A549 (cell line): ENCODE measurements at regions of chr5 and their contacts with region 1.

Region 1: GRCh38 chr5:172714491-172715421 is 56.2 kb downstream of the DUSP1 start:
- DNase-seq: peak; percentile 98 to 99
- ATAC-seq: peak; percentile 82 to 89
- H3K4me3 ChIP-seq: no peak overlapping the region
- H3K27ac ChIP-seq: peak overlapping the region; percentile 98
- H3K4me1 ChIP-seq: peaks cover 45% of the 10 kb centered on the region
- CTCF ChIP-seq: peak; percentile 63
- EP300 ChIP-seq: peak; percentile 99 to 100
- POLR2A ChIP-seq: no peak
- RAD21 ChIP-seq: peak; percentile 59 to 60

Region 2: DNA sequence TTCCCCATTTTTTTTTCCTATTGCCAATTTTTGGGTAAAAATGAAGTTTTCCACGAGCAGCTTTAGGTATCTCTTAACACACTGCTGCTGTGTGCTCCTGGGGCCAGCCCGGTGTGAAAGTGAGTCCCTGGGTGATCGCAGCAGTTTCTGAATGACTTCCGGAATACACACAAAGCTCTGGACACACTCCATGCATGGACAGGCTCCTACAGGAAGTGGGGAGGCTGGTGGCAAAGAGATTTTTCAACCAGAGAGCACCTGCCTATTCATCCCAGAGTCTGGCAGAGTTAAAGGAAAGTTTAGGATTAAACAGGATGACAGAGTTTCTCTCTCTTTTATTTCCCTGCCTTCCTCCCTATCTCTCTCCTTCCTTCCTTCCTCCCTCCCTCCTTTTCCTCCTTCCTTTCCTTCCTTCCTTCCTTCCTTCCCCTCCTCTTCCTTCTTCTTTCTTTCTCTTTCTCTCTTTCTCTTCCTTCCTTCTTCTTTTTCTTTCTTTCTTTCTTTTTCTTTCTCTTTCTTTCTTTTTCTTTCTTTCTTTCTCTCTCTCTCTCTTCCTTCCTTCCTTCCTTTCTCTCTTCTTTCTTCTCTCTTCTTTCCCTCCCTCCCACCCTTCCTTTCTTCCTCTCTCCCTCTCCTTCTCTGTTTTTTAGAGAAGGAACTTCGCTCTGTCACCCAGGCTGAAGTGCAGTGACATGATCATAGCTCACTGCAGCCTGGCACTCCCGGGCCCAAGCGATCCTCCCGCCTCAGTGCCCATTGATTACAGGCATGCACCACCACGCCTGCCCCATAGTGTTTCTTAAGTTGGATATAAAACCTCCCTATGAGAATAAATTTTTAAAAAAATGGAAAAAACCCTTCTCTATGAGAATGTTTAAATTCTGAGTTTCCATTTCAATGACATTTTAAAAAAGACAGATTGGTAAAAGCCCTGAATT is 392.5 kb before region 1 on chr5:
- CTCF ChIA-PET with region 1: no interaction called
- POLR2A ChIA-PET with region 1: no interaction called
- DNase-seq: no peak
- ATAC-seq: peak in 1 of 2 experiments; percentile 32; a peak in 1 of 6 replicates
- H3K4me3 ChIP-seq: no peak overlapping the region
- H3K27ac ChIP-seq: no peak overlapping the region
- H3K4me1 ChIP-seq: no peaks in the 10 kb centered on the region
- CTCF ChIP-seq: no peak
- EP300 ChIP-seq: no peak
- POLR2A ChIP-seq: no peak
- RAD21 ChIP-seq: no peak

Region 3: DNA sequence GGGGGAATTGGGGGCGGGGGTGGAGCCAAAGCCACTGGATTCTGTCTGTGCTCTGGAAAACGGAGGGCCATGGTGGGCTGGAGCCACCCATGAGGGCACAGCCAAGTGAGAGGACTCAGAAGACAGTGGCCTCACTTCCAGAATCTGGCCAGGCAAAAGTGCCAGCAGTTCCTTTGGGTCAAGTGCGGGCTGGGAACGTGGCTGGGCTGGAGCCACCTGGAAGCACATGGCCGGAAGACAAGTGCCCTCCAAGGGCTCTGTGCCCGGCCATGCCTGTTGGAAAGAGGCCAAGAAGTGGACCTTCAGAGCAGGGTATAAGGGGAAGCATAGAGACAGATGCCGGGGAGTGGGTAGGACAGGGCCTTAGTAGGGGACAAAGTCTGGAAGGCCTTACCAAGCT is 248.7 kb before region 1 on chr5:
- CTCF ChIA-PET with region 1: no interaction called
- POLR2A ChIA-PET with region 1: no interaction called
- DNase-seq: no peak
- ATAC-seq: 0 out of 6 replicates have a peak, but pooled peaks of 1 of the 2 experiments have one; percentile 24
- H3K4me3 ChIP-seq: no peak overlapping the region
- H3K27ac ChIP-seq: no peak overlapping the region
- H3K4me1 ChIP-seq: no peaks in the 10 kb centered on the region
- CTCF ChIP-seq: no peak
- EP300 ChIP-seq: no peak
- POLR2A ChIP-seq: no peak
- RAD21 ChIP-seq: no peak

Region 4: GRCh38 chr5:172727551-172727950 is 12.8 kb after region 1 on chr5:
- CTCF ChIA-PET with region 1: interaction called, 36 read pairs
- POLR2A ChIA-PET with region 1: no interaction called
- DNase-seq: no peak
- ATAC-seq: no peak
- H3K4me3 ChIP-seq: no peak overlapping the region
- H3K27ac ChIP-seq: peak overlapping the region in 1 of 2 experiments; percentile 43; a peak in 1 of 6 replicates
- H3K4me1 ChIP-seq: peaks cover 18% of the 10 kb centered on the region; the same call in 2 of the 3 replicates
- CTCF ChIP-seq: no peak
- EP300 ChIP-seq: no peak
- POLR2A ChIP-seq: no peak
- RAD21 ChIP-seq: no peak

Region 5: GRCh38 chr5:172748341-172748843 is 33.6 kb after region 1 on chr5:
- CTCF ChIA-PET with region 1: interaction called, 16 read pairs
- POLR2A ChIA-PET with region 1: no interaction called
- DNase-seq: no peak
- ATAC-seq: no peak
- H3K4me3 ChIP-seq: no peak overlapping the region
- H3K27ac ChIP-seq: no peak overlapping the region
- H3K4me1 ChIP-seq: no peaks in the 10 kb centered on the region
- CTCF ChIP-seq: no peak
- EP300 ChIP-seq: no peak
- POLR2A ChIP-seq: no peak
- RAD21 ChIP-seq: no peak

Region 6: DNA sequence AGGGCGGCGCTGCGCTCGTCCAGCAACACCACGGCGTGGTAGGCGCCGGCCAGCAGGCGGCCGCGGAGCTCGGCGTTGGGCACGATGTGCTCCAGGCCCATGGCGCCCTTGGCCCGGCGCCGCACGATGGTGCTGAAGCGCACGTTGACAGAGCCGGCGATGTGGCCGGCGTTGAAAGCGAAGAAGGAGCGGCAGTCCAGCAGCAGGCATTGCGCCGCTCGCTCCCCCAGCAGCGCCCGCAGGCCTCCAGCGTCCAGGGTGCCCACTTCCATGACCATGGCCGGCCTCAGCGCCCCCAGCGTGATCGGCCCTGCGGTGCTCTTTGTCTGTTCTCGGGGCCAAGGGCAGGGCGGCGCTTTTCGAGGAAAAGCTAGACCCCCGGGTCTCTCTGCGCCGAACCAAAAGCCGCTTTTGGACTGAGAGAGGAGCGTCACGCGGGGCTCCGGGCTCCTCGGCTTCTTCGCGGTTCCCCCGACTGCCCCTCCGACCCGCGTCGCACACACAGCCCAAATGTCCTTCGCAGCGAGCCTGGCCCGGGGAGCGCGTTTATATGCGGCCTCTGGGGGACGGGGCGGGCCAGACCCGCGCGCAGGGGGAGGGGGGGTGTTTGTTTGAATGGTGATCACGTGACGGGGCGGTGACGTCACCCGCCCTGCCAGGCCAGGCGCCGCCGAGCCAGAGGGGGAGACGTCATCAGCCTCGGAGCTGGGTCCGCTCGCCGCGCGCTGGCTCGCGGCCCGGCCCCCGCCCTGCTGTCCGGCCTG is 56.1 kb after region 1 on chr5 and contains the start of gene DUSP1:
- CTCF ChIA-PET with region 1: interaction called, 68 read pairs
- POLR2A ChIA-PET with region 1: interaction called, 68 read pairs
- DNase-seq: peak; percentile 92 to 99
- ATAC-seq: peak; percentile 32 to 50
- H3K4me3 ChIP-seq: peak within 1 kb of the TSS; percentile 75
- H3K27ac ChIP-seq: peak within 1 kb of the TSS; percentile 97 to 100
- H3K4me1 ChIP-seq: peaks cover 42% of the 10 kb centered on the region
- CTCF ChIP-seq: peak; percentile 27; the same call in 1 of the 3 replicates
- EP300 ChIP-seq: peak; percentile 89 to 96
- POLR2A ChIP-seq: peak; percentile 99
- RAD21 ChIP-seq: peak; percentile 8 to 52
- polyA plus RNA-seq, gene DUSP1: 525 and 594 TPM in 2 replicates

Region 7: DNA sequence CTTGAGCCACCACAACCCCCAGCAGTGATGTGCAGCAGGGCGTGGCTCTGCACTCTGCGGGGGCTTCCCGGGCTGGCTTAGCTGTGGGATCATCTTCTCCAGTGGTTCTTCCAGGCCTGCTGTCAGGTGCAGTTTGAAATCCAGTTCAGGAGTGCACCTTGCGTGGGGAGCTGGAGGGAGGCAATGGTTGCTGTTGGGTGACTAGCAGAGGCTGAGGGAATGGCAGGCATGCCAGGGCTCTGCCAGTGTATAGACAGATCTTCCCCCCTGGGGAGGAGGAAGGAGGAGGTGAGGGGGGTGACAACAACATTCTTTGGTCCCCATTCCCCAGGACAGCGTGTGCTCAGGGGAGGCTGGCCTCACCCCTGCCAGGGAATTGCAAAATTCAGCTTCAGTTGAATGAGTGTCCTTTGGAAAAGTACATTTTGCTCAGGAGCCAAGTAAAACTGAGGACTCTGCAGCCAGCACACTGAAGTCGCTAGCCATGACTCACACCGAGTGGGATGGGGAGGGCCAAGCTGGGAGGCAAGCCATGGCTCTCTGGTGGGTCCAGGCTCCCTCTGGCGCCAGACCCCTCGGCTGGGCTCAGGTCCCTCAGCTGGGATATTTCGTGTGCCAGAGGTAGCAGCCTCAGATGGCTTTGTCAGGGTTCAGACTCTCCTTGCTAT is 154.3 kb after region 1 on chr5:
- CTCF ChIA-PET with region 1: interaction called, 25 read pairs
- POLR2A ChIA-PET with region 1: interaction called, 5 read pairs
- DNase-seq: peak; percentile 83 to 93
- ATAC-seq: peak; percentile 79 to 80
- H3K4me3 ChIP-seq: 0 out of 3 replicates have a peak overlapping the region, but pooled peaks have one; percentile 18
- H3K27ac ChIP-seq: peak overlapping the region; percentile 96 to 99
- H3K4me1 ChIP-seq: peaks cover 95% of the 10 kb centered on the region
- CTCF ChIP-seq: no peak; the same call in 2 of the 3 replicates
- EP300 ChIP-seq: peak; percentile 91 to 95; a peak in 4 of 5 replicates
- POLR2A ChIP-seq: no peak
- RAD21 ChIP-seq: peak; percentile 55 to 70

Region 8: GRCh38 chr5:172910828-172911627 is 196.3 kb after region 1 on chr5:
- CTCF ChIA-PET with region 1: interaction called, 99 read pairs
- POLR2A ChIA-PET with region 1: interaction called, 5 read pairs
- DNase-seq: peak; percentile 67 to 96
- ATAC-seq: peak; percentile 85 to 91
- H3K4me3 ChIP-seq: no peak overlapping the region
- H3K27ac ChIP-seq: peak overlapping the region; percentile 98 to 100
- H3K4me1 ChIP-seq: peaks cover 68% of the 10 kb centered on the region
- CTCF ChIP-seq: peak; percentile 70
- EP300 ChIP-seq: peak; percentile 98 to 99
- POLR2A ChIP-seq: no peak
- RAD21 ChIP-seq: peak; percentile 82 to 87

Region 9: GRCh38 chr5:172943283-172943841 is 228.6 kb after region 1 on chr5:
- CTCF ChIA-PET with region 1: interaction called, 480 read pairs
- POLR2A ChIA-PET with region 1: no interaction called
- DNase-seq: no peak
- ATAC-seq: peak in 1 of 2 experiments; percentile 9; a peak in 1 of 6 replicates
- H3K4me3 ChIP-seq: no peak overlapping the region
- H3K27ac ChIP-seq: peak overlapping the region; percentile 16 to 70; a peak in 4 of 6 replicates
- H3K4me1 ChIP-seq: peaks cover 19% of the 10 kb centered on the region
- CTCF ChIP-seq: no peak
- EP300 ChIP-seq: no peak
- POLR2A ChIP-seq: no peak
- RAD21 ChIP-seq: no peak